Left ventricle myocardium inferior (tissue), 1 donor: ENCODE measurements at regions of chrX and their contacts with region 1.

Region 1: DNA sequence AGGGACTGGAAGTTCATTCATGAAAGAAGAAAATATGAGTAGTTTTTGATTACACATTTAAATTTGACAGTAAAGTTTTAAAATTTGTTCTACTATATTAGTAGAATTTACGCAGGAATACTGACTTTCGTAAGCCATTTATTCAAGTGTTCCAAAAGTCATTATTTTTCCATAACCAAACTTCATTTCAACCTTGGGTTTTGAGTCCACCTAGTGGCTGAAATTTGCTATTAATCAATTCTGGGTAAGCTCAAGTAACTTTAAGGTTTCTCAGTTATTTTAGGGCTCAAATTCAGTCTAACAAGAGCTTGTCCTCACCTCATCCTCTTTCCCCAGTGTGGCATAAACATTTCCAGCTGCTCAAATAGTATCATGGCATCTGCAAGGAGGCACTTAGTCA is 175.4 kb downstream of the SH3BGRL start:
- DNase-seq: no peak
- H3K4me3 ChIP-seq: no peak overlapping the region
- H3K27ac ChIP-seq: no peak overlapping the region
- H3K4me1 ChIP-seq: no peaks in the 10 kb centered on the region
- H3K27me3 ChIP-seq: no peaks in the 10 kb centered on the region
- CTCF ChIP-seq: peak; percentile 56

Region 2: GRCh38 chrX:81174286-81174685 is 203.0 kb before region 1 on chrX:
- intact Hi-C with region 1: loop called (anchors 10 kb)
- DNase-seq: no peak
- H3K4me3 ChIP-seq: no peak overlapping the region
- H3K27ac ChIP-seq: no peak overlapping the region
- H3K4me1 ChIP-seq: no peaks in the 10 kb centered on the region
- H3K27me3 ChIP-seq: no peaks in the 10 kb centered on the region
- CTCF ChIP-seq: peak; percentile 29

Region 3: DNA sequence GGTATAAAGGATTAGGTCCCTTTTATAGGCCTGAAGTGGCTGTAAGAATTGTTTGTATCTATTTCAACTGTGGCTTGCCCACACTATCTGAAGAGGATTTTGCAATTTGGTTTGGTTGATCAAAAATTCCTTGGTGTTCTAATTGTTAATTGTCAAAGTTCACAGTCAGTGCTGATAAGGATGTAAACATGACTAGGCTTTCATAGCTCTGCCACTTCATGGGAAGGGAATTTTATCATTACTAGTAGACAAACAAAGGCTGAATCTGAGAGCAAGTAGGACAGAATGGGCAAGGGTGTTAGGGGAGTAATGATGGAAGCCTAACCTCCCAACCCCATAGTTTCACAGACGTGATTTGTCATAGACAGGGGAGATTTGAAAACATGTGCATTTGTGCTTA is 956.2 kb after region 1 on chrX:
- intact Hi-C with region 1: no loop called
- DNase-seq: no peak
- H3K4me3 ChIP-seq: no peak overlapping the region
- H3K27ac ChIP-seq: no peak overlapping the region
- H3K4me1 ChIP-seq: no peaks in the 10 kb centered on the region
- H3K27me3 ChIP-seq: no peaks in the 10 kb centered on the region
- CTCF ChIP-seq: no peak